Heart right ventricle (tissue), 16 donors: ENCODE measurements at regions of chr9 and their contacts with region 1.

Region 1: DNA sequence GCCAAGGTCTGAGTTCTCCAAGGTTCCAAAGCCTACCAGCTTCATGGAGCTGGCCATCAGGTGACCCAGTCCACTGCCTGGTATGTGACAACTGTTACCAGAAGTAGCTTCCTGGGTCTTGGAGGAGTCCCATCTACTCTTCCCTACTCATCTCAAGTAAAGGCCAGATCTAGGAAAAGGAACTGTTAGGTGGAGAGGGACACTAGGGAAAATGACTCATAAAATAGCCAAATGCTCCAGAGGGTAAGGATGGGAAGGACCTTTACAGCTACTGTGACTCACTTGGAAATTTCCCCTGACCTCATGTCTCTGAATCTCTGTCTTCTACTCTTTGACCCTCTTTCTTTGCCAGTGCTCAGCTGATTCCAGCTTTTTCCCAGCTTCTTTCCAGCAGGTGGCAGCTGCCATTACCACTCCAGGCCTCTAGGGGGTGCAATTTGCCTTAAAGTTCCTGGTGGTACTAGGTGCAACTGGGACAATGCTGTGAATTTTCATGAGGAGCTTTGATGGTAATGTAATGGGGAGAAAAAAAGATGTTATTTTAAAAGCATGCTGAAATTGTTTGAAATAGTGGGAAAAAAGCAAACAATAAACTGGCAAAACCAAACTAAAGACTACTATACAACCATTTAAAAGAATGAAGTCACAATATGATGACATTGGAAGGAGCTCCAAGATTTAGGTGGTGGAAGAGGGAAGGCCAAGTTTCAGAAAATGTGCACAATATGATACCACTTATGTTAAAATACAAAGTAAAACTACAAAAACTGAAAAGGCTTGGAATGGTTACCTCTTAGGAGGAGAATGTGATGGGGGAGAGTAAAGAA is 27.1 kb upstream of the MYORG start:
- DNase-seq: peak; percentile 64 to 71
- ATAC-seq: peak in 7 of 8 donors; percentile 39 to 71 (median 61)
- H3K4me3 ChIP-seq: no peak overlapping the region
- H3K27ac ChIP-seq: no peak overlapping the region
- H3K4me1 ChIP-seq: peaks cover 0 to 5% (median 0%) of the 10 kb centered on the region in 9 donors
- H3K27me3 ChIP-seq: no peaks in the 10 kb centered on the region
- CTCF ChIP-seq: peak; percentile 92 to 99 (median 98)

Region 2: GRCh38 chr9:33510264-33511183 is 893.2 kb before region 1 on chr9:
- intact Hi-C with region 1: no loop called
- DNase-seq: peak; percentile 72 to 77
- ATAC-seq: peak; percentile 91 to 98 (median 93)
- H3K4me3 ChIP-seq: peak overlapping the region; percentile 40 to 74 (median 60)
- H3K27ac ChIP-seq: peak overlapping the region; percentile 38 to 97 (median 90)
- H3K4me1 ChIP-seq: peaks cover 0 to 10% (median 7%) of the 10 kb centered on the region in 9 donors
- H3K27me3 ChIP-seq: no peaks in the 10 kb centered on the region
- CTCF ChIP-seq: no peak

Region 3: GRCh38 chr9:34256104-34256503 is 147.7 kb before region 1 on chr9:
- intact Hi-C with region 1: no loop called
- DNase-seq: no peak
- ATAC-seq: no peak
- H3K4me3 ChIP-seq: no peak overlapping the region
- H3K27ac ChIP-seq: peak overlapping the region in 7 of 10 donors; percentile 6 to 84 (median 77)
- H3K4me1 ChIP-seq: peaks cover 21 to 76% (median 48%) of the 10 kb centered on the region in 9 donors
- H3K27me3 ChIP-seq: no peaks in the 10 kb centered on the region
- CTCF ChIP-seq: peak in 5 of 9 donors; percentile 19 to 43 (median 21)

Region 4: GRCh38 chr9:34493972-34494535 is 90.3 kb after region 1 on chr9:
- intact Hi-C with region 1: loop called in 1 of 10 experiments (anchors 10 kb)
- DNase-seq: peak; percentile 57 to 70
- ATAC-seq: peak in 7 of 8 donors; percentile 46 to 80 (median 71)
- H3K4me3 ChIP-seq: no peak overlapping the region
- H3K27ac ChIP-seq: no peak overlapping the region
- H3K4me1 ChIP-seq: no peaks in the 10 kb centered on the region
- H3K27me3 ChIP-seq: no peaks in the 10 kb centered on the region
- CTCF ChIP-seq: no peak

Region 5: GRCh38 chr9:34546834-34547827 is 143.4 kb after region 1 on chr9:
- intact Hi-C with region 1: loop called in 1 of 10 experiments (anchors 5 kb)
- DNase-seq: peak; percentile 56 to 64
- ATAC-seq: peak; percentile 44 to 78 (median 68)
- H3K4me3 ChIP-seq: no peak overlapping the region
- H3K27ac ChIP-seq: no peak overlapping the region
- H3K4me1 ChIP-seq: peaks cover 0 to 6% (median 0%) of the 10 kb centered on the region in 9 donors
- H3K27me3 ChIP-seq: peaks cover 0 to 9% (median 3%) of the 10 kb centered on the region in 7 donors
- CTCF ChIP-seq: peak; percentile 44 to 72 (median 67)

Region 6: DNA sequence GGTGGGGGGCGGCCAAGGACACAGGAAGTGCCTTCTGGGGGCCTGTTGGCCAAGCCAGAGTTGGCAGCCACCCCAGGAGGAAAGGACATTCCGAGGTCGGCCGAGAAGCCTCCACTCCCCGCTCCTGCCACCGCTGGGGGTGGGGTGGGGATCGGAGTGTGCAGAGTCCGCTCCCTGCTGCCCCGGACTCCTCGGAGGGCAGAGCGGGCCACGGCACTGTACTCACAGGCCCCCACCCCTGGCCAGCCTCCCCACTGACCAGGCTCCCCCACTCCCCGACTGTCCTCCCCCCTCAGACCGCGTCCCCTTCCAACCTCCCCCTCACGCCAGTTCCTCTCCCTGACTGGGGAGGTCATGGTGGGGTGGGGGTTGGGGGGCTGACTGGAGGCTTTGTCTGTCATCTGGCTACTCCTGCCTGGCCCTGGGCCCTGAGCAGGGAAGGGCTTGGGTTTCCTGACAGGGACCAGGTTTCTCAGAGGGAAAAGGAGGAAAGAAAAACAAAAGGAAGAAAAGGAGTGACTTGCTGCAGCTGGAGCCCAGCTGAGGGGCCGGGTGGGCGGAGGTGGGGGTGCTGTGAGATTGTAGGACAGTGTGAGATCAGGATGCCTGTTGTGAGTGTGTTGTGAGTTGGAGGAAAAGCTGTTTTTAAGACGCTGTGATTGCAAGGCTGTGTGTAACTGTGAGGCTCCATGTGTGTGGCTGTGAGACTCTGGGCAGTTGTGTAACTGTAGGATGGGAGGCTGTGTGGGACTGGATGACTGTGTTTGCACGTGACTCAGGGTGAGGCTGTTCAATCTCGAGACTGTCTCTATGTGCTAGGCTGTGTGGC is 156.1 kb after region 1 on chr9:
- intact Hi-C with region 1: no loop called
- DNase-seq: peak; percentile 37 to 61
- ATAC-seq: peak; percentile 58 to 78 (median 74)
- H3K4me3 ChIP-seq: peak overlapping the region in 6 of 10 donors; percentile 9 to 26 (median 22)
- H3K27ac ChIP-seq: peak overlapping the region in 4 of 10 donors; percentile 21 to 44 (median 32)
- H3K4me1 ChIP-seq: peaks cover 7 to 28% (median 25%) of the 10 kb centered on the region in 9 donors
- H3K27me3 ChIP-seq: peaks cover 0 to 24% (median 0%) of the 10 kb centered on the region in 7 donors
- CTCF ChIP-seq: no peak

Region 7: DNA sequence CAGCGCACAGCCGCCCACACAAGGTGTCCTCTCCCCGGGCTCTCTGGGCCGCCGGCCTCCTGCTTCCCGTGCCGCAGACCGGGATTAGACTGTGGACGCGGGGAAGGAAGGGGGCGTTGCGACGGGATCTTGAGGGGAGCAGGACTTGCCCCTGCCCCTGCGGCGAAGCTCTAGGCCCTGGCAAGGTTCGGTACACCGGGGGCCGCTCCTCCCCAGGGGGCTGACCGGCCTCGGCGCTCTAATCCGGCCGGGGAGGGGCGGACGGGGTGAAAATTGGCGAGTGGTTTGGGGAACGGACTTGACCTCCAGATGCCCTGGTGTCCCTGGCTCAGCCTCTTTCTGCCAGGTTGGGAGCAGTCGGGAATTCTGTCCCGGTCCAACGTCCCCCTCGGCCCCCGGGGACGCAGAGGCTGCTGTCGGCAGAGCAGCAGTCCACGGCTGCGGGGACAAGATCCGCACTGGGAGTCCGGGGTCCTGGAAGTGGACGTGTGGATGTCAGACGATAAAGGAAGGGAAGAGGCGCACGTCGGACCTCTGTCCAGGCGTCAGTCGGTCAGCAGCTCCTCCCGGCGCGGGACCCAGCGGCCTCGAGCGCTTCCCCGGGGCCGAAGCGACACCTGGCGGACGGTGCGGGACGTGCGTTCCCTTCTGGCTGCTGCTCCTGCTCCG is 187.6 kb after region 1 on chr9:
- intact Hi-C with region 1: loop called in 4 of 10 experiments (anchors 5 to 10 kb)
- DNase-seq: peak; percentile 85 to 90
- ATAC-seq: peak; percentile 81 to 96 (median 89)
- H3K4me3 ChIP-seq: peak overlapping the region in 9 of 10 donors; percentile 32 to 57 (median 51)
- H3K27ac ChIP-seq: peak overlapping the region in 6 of 10 donors; percentile 12 to 54 (median 32)
- H3K4me1 ChIP-seq: peaks cover 16 to 53% (median 38%) of the 10 kb centered on the region in 9 donors
- H3K27me3 ChIP-seq: peaks cover 0 to 86% (median 56%) of the 10 kb centered on the region in 7 donors
- CTCF ChIP-seq: peak; percentile 82 to 95 (median 92)

Region 8: DNA sequence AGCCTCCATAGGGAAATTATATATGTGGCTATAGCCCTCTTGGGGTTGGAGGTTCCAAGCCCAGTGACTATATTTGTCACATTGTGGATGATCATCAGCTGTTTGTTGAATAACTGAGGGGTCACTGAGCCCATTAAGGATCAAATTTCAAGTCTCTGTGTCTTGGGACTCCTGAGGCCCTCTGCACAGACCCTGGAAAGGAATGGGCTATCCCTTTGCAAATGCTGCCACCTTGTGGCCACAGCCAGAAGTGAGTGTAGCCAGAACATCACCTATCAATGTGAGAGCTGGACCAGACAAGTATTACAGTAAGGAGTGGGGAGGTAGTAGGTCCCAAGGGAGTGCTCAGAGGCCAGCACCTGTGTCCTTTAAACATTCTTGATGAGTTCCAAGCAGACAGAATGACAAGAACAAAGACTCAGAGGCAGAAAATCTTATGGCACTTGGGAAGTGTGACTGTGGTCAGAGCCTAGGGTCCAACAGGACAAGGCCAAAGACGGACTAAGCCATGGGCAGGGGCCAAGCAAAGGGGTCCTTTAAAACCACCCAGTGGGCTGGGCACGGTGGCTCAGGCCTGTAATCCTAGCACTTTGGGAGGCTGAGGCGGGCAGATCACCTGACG is 200.0 kb after region 1 on chr9:
- intact Hi-C with region 1: loop called in 7 of 10 experiments (anchors 2 to 10 kb)
- DNase-seq: peak; percentile 78 to 85
- ATAC-seq: peak; percentile 76 to 91 (median 87)
- H3K4me3 ChIP-seq: no peak overlapping the region
- H3K27ac ChIP-seq: no peak overlapping the region
- H3K4me1 ChIP-seq: no peaks in the 10 kb centered on the region
- H3K27me3 ChIP-seq: no peaks in the 10 kb centered on the region
- CTCF ChIP-seq: peak; percentile 82 to 94 (median 93)

Region 9: DNA sequence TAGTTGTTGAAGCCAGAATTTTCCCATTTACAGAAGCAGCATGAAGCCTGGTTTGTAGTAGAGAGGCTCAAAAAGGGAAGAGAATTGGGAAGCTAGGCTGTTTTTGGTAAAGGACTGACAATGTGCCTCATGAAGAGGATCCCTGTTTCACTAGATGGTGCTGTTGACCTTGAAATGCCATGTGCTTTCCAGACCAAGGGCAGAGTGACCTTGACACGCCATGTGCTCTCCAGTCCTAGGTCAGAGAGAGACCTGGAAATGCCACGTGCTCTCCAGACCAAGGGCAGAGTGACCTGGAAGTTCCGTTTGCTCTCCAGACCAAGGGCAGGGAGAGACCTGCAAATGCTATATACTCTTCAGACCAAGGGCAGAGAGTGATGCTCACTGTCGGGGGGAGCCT is 790.0 kb after region 1 on chr9:
- intact Hi-C with region 1: loop called in 1 of 10 experiments (anchors 5 kb)
- DNase-seq: no peak
- ATAC-seq: peak in 1 of 8 donors; percentile 47
- H3K4me3 ChIP-seq: no peak overlapping the region
- H3K27ac ChIP-seq: no peak overlapping the region
- H3K4me1 ChIP-seq: peaks cover 0 to 6% (median 0%) of the 10 kb centered on the region in 9 donors
- H3K27me3 ChIP-seq: no peaks in the 10 kb centered on the region
- CTCF ChIP-seq: peak in 3 of 9 donors; percentile 11 to 23 (median 12)